Heart left ventricle (tissue), 16 donors: ENCODE measurements at regions of chr2 and their contacts with region 1.

Region 1: GRCh38 chr2:144332356-144333142 is 187.4 kb downstream of the ZEB2 start:
- DNase-seq: peak; percentile 87 to 94 (median 91)
- ATAC-seq: peak; percentile 90 to 97 (median 95)
- H3K4me3 ChIP-seq: peak overlapping the region; percentile 66 to 95 (median 82)
- H3K27ac ChIP-seq: peak overlapping the region; percentile 79 to 95 (median 88)
- H3K4me1 ChIP-seq: peaks cover 0 to 18% (median 11%) of the 10 kb centered on the region in 12 donors
- H3K27me3 ChIP-seq: no peaks in the 10 kb centered on the region
- CTCF ChIP-seq: no peak
- POLR2A ChIP-seq: peak in 1 of 2 donors; percentile 63

Region 2: GRCh38 chr2:144249035-144249637 is 83.4 kb before region 1 on chr2:
- intact Hi-C with region 1: loop called in 1 of 10 experiments (anchors 5 kb)
- DNase-seq: no peak
- ATAC-seq: peak; percentile 55 to 67 (median 60)
- H3K4me3 ChIP-seq: no peak overlapping the region
- H3K27ac ChIP-seq: no peak overlapping the region
- H3K4me1 ChIP-seq: peaks cover 0 to 8% (median 0%) of the 10 kb centered on the region in 12 donors
- H3K27me3 ChIP-seq: no peaks in the 10 kb centered on the region
- CTCF ChIP-seq: no peak
- POLR2A ChIP-seq: no peak

Region 3: DNA sequence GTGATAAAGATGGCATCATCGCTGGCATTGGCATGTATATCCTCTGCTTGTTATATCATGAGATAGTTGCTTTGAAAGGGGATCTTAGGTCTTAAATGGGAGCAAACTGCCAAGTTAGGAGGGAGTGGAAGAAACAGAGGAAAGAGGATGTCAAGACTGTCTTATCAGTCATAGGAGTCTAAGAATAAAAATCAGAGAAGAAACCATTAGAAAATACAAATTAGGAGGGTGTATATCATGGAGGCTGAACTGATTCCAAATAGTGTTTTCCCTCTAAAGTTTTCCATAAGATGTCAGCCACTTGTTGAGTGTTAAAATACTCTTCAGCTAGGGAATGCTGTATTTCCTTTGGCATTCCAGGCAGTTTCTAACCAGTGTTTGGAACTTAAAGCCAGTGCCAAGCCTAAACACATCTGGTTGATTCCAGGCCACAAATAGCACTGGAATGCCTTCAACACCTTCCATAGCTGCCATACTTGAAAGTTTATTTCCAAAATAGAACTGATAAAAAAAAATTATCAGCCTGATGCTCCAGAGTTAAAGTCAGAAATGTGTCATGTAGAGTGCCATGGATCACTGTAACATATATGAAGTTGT is 58.0 kb after region 1 on chr2:
- intact Hi-C with region 1: loop called in 2 of 10 experiments (anchors 1 to 2 kb)
- DNase-seq: no peak
- ATAC-seq: peak; percentile 52 to 76 (median 67)
- H3K4me3 ChIP-seq: no peak overlapping the region
- H3K27ac ChIP-seq: peak overlapping the region in 8 of 12 donors; percentile 13 to 58 (median 36)
- H3K4me1 ChIP-seq: peaks cover 0 to 24% (median 5%) of the 10 kb centered on the region in 12 donors
- H3K27me3 ChIP-seq: no peaks in the 10 kb centered on the region
- CTCF ChIP-seq: no peak
- POLR2A ChIP-seq: no peak

Region 4: DNA sequence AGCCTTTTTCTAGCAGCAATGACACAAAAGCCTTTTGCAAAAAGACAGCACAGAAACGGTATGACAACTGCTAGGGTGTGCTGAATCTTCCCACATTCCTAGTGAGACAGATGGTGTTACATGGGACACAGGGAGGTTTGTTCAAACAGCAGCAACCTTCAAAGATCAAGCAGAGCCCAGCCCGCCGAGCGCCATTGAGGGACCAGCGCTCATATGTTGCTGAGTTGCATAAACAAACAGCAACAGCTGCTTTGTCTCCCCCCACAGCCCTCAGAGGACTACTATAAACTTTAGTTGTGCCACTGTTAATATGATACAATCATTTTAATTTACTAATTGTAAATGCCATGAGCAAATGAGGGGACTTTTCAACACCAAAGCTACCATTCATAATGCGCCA is 69.7 kb after region 1 on chr2:
- intact Hi-C with region 1: loop called in 1 of 10 experiments (anchors 2 kb)
- DNase-seq: peak in 2 of 5 donors; percentile 33 to 47
- ATAC-seq: peak in 2 of 4 donors; percentile 44 to 48
- H3K4me3 ChIP-seq: no peak overlapping the region
- H3K27ac ChIP-seq: peak overlapping the region in 7 of 12 donors; percentile 0 to 42 (median 11)
- H3K4me1 ChIP-seq: peaks cover 0 to 45% (median 17%) of the 10 kb centered on the region in 12 donors
- H3K27me3 ChIP-seq: no peaks in the 10 kb centered on the region
- CTCF ChIP-seq: no peak
- POLR2A ChIP-seq: no peak

Region 5: GRCh38 chr2:144430722-144431391 is 98.3 kb after region 1 on chr2:
- intact Hi-C with region 1: loop called in 2 of 10 experiments (anchors 1 to 5 kb)
- DNase-seq: peak in 2 of 5 donors; percentile 44 to 46
- ATAC-seq: peak; percentile 81 to 85 (median 82)
- H3K4me3 ChIP-seq: peak overlapping the region in 10 of 12 donors; percentile 3 to 50 (median 35)
- H3K27ac ChIP-seq: peak overlapping the region; percentile 37 to 82 (median 75)
- H3K4me1 ChIP-seq: peaks cover 0 to 97% (median 51%) of the 10 kb centered on the region in 12 donors
- H3K27me3 ChIP-seq: no peaks in the 10 kb centered on the region
- CTCF ChIP-seq: no peak
- POLR2A ChIP-seq: no peak

Region 6: DNA sequence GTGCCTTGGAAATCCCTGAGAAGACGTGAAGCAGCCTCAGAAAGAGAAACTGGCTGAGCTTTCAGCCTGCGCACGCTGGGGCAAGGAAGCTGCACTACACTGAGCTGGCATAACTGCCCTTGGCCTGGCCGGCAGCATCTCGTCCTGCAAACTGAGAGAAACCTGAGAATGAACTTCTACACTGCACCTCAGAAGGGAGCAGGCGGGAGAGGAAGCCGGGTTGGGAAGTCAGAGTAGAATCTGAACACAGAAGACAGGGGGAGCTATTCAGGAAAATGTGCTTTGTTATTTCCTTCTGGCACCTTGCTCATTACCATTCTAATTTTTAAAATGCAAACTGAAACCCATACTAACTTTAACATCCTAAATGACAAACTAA is 116.5 kb after region 1 on chr2:
- intact Hi-C with region 1: loop called in 2 of 10 experiments (anchors 10 kb)
- DNase-seq: peak in 2 of 5 donors; percentile 42 to 56
- ATAC-seq: peak; percentile 33 to 74 (median 60)
- H3K4me3 ChIP-seq: peak overlapping the region in 7 of 12 donors; percentile 10 to 29 (median 23)
- H3K27ac ChIP-seq: peak overlapping the region; percentile 23 to 63 (median 58)
- H3K4me1 ChIP-seq: peaks cover 0 to 86% (median 45%) of the 10 kb centered on the region in 12 donors
- H3K27me3 ChIP-seq: no peaks in the 10 kb centered on the region
- CTCF ChIP-seq: peak in 11 of 12 donors; percentile 17 to 63 (median 46)
- POLR2A ChIP-seq: no peak